ENCODE measurements at regions of chr9 and their contacts with region 1.

Region 1: DNA sequence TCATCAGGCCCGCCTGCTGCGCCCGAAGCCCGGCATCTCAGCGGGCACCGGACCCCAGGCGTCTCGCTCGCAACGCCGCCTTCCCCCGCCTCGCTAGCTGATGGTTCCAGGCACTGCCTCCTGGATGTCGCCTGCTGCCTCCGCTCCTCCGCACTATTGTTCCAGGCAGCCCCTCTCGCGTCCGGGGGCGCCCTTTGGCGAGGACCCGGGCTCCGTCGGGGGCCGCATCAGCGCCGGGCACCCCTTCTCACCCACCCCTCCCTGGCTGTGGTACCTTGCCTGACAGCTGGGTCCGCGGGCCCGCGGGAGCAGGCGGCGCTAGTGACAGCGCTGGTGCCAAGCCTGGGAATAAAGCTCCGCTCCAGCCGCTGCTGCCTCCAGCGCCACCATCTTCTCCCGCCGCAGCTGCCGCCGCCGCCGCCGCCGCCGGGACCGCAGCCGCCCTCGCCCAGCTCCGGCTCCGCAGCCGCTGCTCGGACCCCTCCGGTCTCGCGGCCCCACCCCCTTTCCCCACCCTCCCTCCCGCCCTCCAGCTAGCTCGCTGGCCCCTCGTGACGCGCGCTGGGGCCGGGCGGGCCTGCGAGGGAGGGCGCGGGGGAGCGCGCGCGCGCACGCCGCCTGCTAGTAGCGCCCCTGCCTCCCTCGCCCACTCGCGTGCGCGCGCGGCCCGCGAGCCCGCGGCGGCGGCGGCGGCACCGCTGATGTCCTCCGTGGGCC is at the start of gene APBA1:
- DNase-seq: peak in 32 of 35 experiments; percentile 3 to 71 (median 30)
- ATAC-seq: peak; percentile 69 to 73 (median 72)
- H3K4me3 ChIP-seq: peak within 1 kb of the TSS; percentile 57 to 80
- H3K4me3 Mint-ChIP-seq: peak within 1 kb of the TSS; percentile 82 to 88 (median 82)
- H3K27ac ChIP-seq: no peak within 1 kb of the TSS
- H3K27ac Mint-ChIP-seq: no peak within 1 kb of the TSS
- H3K4me1 ChIP-seq: peaks cover 14 to 17% of the 10 kb centered on the region in 2 experiments
- H3K4me1 Mint-ChIP-seq: peaks cover 20 to 36% (median 28%) of the 10 kb centered on the region in 3 donors
- H3K27me3 ChIP-seq: peaks cover 3 to 27% of the 10 kb centered on the region in 2 experiments
- H3K27me3 Mint-ChIP-seq: peaks cover 8 to 15% of the 10 kb centered on the region in 2 donors
- total RNA-seq, gene APBA1: 0.51 to 1.8 (median 0.78) TPM

Region 2: GRCh38 chr9:69168709-69169217 is 503.3 kb before region 1 on chr9:
- CTCF ChIA-PET with region 1: no interaction called
- POLR2A ChIA-PET with region 1: interaction called in 1 of 2 experiments, 12 read pairs
- DNase-seq: peak in 26 of 35 experiments; percentile 1 to 46 (median 24)
- ATAC-seq: peak; percentile 59 to 84 (median 74)
- H3K4me3 ChIP-seq: peak overlapping the region in 1 of 2 donors; percentile 42
- H3K4me3 Mint-ChIP-seq: peak overlapping the region; percentile 77 to 85 (median 82)
- H3K27ac ChIP-seq: peak overlapping the region; percentile 19
- H3K27ac Mint-ChIP-seq: peak overlapping the region; percentile 77 to 86
- H3K4me1 ChIP-seq: peaks cover 0 to 14% of the 10 kb centered on the region in 2 experiments
- H3K4me1 Mint-ChIP-seq: peaks cover 22 to 27% (median 25%) of the 10 kb centered on the region in 3 donors
- H3K27me3 ChIP-seq: peaks cover 0 to 11% of the 10 kb centered on the region in 2 experiments
- H3K27me3 Mint-ChIP-seq: peaks cover 24 to 26% of the 10 kb centered on the region in 2 donors